Sigmoid colon (tissue), 7 donors: ENCODE measurements at regions of chr4 and their contacts with region 1.

Region 1: GRCh38 chr4:174450457-174451125 is 71.7 kb downstream of the HPGD start:
- DNase-seq: no peak
- H3K4me3 ChIP-seq: no peak overlapping the region
- H3K27ac ChIP-seq: peak overlapping the region; percentile 9 to 74 (median 59)
- H3K4me1 ChIP-seq: peaks cover 0 to 82% (median 58%) of the 10 kb centered on the region in 4 donors
- H3K27me3 ChIP-seq: no peaks in the 10 kb centered on the region
- CTCF ChIP-seq: no peak
- EP300 ChIP-seq: peak in 1 of 4 donors; percentile 18
- POLR2A ChIP-seq: no peak

Region 2: DNA sequence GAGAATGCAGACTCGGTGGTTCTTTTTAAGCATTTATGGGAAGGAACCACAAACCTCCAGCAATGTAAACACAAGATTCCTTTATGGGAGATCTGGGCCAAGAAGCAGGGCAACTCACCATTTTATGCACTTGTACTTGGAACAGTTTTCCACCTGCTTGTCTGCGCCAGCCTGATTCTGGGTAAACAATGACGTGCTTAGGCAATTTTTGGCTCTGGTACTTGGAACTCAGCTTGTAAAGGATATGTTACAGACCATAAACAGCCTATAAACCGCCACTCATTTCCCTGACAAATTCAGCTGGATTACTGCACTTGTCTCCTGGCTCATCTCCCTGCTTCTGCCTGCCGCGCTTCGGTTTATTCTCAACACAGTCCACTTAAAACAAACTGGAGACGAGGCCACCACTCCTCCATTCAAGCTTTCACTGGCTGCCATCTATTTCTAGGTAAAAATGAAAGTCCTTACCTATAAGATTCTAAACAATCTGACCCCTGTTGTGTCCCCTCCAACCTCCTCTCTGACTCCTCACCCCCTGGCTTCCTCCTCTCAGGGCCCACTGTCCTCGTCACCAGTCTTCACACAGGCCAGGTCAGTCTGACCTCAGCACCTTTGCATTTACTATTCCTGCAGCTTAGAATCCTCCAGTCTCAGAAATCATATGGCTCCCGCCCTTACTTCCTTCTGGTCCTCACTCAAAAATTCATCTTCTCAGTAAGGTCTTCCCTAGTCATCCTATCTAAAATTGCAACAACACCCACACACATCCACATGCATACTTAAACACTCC is 1487.8 kb before region 1 on chr4:
- intact Hi-C with region 1: loop called (anchors 5 kb)
- DNase-seq: peak; percentile 90
- H3K4me3 ChIP-seq: no peak overlapping the region
- H3K27ac ChIP-seq: peak overlapping the region; percentile 60 to 83 (median 73)
- H3K4me1 ChIP-seq: peaks cover 0 to 31% (median 25%) of the 10 kb centered on the region in 4 donors
- H3K27me3 ChIP-seq: no peaks in the 10 kb centered on the region
- CTCF ChIP-seq: no peak
- EP300 ChIP-seq: peak; percentile 87 to 98 (median 96)
- POLR2A ChIP-seq: no peak

Region 3: GRCh38 chr4:174222266-174222872 is 228.2 kb before region 1 on chr4:
- intact Hi-C with region 1: loop called (anchors 10 kb)
- DNase-seq: no peak
- H3K4me3 ChIP-seq: no peak overlapping the region
- H3K27ac ChIP-seq: peak overlapping the region in 1 of 4 donors; percentile 19
- H3K4me1 ChIP-seq: peaks cover 0 to 22% (median 16%) of the 10 kb centered on the region in 4 donors
- H3K27me3 ChIP-seq: peaks cover 0 to 5% (median 0%) of the 10 kb centered on the region in 3 donors
- CTCF ChIP-seq: peak in 3 of 4 experiments; percentile 29 to 59 (median 38)
- EP300 ChIP-seq: no peak
- POLR2A ChIP-seq: no peak

Region 4: GRCh38 chr4:174595161-174595929 is 144.8 kb after region 1 on chr4:
- intact Hi-C with region 1: loop called (anchors 2 kb)
- DNase-seq: no peak
- H3K4me3 ChIP-seq: no peak overlapping the region
- H3K27ac ChIP-seq: no peak overlapping the region
- H3K4me1 ChIP-seq: peaks cover 0 to 15% (median 3%) of the 10 kb centered on the region in 4 donors
- H3K27me3 ChIP-seq: no peaks in the 10 kb centered on the region
- CTCF ChIP-seq: no peak
- EP300 ChIP-seq: no peak
- POLR2A ChIP-seq: no peak